Lower leg skin (tissue), 4 donors: ENCODE measurements at regions of chr13 and their contacts with region 1.

Region 1: GRCh38 chr13:38223089-38223488 is 126.6 kb upstream of the UFM1 start:
- DNase-seq: no peak
- H3K4me3 ChIP-seq: no peak overlapping the region
- CTCF ChIP-seq: no peak
- POLR2A ChIP-seq: no peak

Region 2: DNA sequence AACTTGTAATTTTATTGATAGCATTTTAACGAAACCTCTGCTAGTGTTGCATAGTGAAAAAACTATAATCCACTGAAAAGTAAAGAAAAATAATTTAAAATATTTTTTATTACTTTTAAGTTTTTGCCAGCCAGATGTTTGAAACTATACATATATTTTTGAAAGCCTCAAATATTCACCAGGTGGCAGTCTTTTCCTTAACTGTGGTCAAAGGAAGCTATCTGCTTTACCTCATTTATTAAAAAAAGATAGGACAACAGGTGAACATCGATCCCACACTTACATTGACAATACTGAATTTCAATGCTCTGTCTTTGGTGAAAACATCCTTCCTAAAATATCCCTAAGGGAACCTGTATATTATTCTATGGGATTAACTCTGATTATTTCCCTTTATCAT is 454.0 kb before region 1 on chr13:
- intact Hi-C with region 1: no loop called
- DNase-seq: no peak
- H3K4me3 ChIP-seq: no peak overlapping the region
- CTCF ChIP-seq: no peak
- POLR2A ChIP-seq: no peak

Region 3: DNA sequence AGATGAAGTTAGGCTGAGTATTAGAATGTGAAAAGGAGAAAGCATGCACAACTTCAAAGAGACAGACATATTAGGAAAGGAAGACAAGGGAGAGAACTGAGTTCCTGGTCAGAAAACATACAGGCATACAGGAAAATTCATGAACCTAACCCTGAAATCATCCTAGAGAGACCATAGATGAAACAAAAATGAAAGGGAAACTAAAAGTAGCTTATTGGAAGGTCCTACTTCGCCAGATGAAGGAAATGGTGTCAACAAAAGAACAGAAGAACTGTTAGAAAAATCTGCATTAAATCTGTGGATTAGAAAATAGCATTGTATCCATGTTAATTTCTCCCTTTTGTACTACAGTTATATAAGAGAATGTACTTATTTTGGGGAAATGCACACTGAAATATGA is 42.4 kb before region 1 on chr13:
- intact Hi-C with region 1: no loop called
- DNase-seq: no peak
- H3K4me3 ChIP-seq: no peak overlapping the region
- CTCF ChIP-seq: no peak
- POLR2A ChIP-seq: no peak

Region 4: GRCh38 chr13:38202740-38203139 is 20.3 kb before region 1 on chr13:
- intact Hi-C with region 1: loop called (anchors 2 kb)
- DNase-seq: no peak
- H3K4me3 ChIP-seq: no peak overlapping the region
- CTCF ChIP-seq: no peak
- POLR2A ChIP-seq: no peak